ENCODE measurements at regions of chr12 and their contacts with region 1.

Region 1: GRCh38 chr12:112382232-112382796 is at the start of gene HECTD4:
- DNase-seq: peak; percentile 96 to 97
- H3K4me3 ChIP-seq: peak within 1 kb of the TSS; percentile 91 to 100
- H3K27ac ChIP-seq: peak within 1 kb of the TSS; percentile 73 to 88
- H3K4me1 ChIP-seq: peaks cover 0 to 25% (median 11%) of the 10 kb centered on the region in 4 donors
- H3K27me3 ChIP-seq: no peaks in the 10 kb centered on the region
- CTCF ChIP-seq: no peak

Region 2: GRCh38 chr12:112198120-112198733 is 184.1 kb before region 1 on chr12:
- intact Hi-C with region 1: loop called (anchors 10 kb)
- DNase-seq: no peak
- H3K4me3 ChIP-seq: no peak overlapping the region
- H3K27ac ChIP-seq: no peak overlapping the region
- H3K4me1 ChIP-seq: no peaks in the 10 kb centered on the region
- H3K27me3 ChIP-seq: no peaks in the 10 kb centered on the region
- CTCF ChIP-seq: peak; percentile 32 to 42

Region 3: DNA sequence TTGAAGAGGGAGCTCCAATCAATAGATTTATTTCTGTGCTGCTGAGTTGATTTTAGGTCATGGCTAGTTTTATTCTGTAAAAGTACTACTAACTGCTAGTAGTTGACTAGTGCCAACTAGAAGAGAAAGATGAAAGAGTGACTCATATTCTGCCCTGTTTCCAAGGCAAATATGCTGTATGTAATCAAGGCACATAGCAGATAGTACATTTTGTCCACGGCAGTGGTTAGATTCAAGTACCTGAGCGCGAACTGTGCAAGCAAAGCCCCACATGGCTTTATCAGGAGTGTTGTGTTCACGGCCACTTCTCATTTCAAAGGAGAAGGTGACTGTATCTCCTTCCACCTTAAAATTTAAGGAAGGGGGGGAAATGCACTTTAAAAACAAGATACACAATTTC is 130.1 kb before region 1 on chr12:
- intact Hi-C with region 1: loop called (anchors 10 kb)
- DNase-seq: no peak
- H3K4me3 ChIP-seq: no peak overlapping the region
- H3K27ac ChIP-seq: no peak overlapping the region
- H3K4me1 ChIP-seq: no peaks in the 10 kb centered on the region
- H3K27me3 ChIP-seq: no peaks in the 10 kb centered on the region
- CTCF ChIP-seq: no peak

Measured in tibial artery (tissue), 4 donors.